Astrocyte of the cerebellum (primary cell): ENCODE measurements at regions of chr11 and their contacts with region 1.

Region 1: DNA sequence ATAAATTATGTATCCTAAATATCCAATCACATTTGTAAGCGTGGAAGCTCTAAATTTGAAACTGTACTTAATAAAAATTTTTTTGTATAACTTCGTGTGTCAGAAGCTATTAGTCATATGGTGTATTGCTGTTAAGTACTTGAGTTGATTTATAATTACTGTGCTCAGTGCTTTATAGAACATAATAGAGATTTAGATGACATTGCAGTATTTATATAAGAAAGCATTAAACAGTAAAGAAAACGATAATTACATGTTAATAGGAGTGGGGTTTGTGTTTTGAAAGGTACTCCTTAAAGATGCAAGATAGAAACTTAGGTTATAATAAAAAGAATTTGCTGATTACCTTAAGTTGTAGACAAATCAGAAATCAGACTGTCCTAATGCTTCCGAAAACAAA is 5.9 kb upstream of the TCP11L1 start:
- DNase-seq: no peak
- H3K4me3 ChIP-seq: no peak overlapping the region
- CTCF ChIP-seq: no peak

Region 2: DNA sequence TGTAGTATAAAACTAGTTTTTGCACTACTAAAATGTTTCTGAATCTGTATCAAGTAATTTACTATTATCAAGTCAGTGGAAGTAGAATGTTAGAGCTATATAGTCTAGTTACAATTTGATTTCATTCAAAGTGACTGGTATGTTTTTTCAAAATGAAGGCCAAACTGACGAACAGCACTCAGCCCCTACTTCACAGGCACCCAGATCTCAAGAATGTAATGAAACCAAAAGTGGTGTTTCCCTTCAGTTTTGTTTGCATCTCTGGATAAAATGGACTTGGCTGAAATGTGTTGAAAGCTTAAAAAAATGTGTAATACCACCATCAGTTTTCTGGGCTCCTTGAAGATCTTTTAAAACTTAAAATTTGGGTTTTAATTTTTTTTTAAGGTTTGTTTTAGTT is 94.4 kb before region 1 on chr11:
- in situ Hi-C with region 1: loop called (anchors 5 kb)
- DNase-seq: no peak
- H3K4me3 ChIP-seq: no peak overlapping the region
- CTCF ChIP-seq: no peak

Region 3: DNA sequence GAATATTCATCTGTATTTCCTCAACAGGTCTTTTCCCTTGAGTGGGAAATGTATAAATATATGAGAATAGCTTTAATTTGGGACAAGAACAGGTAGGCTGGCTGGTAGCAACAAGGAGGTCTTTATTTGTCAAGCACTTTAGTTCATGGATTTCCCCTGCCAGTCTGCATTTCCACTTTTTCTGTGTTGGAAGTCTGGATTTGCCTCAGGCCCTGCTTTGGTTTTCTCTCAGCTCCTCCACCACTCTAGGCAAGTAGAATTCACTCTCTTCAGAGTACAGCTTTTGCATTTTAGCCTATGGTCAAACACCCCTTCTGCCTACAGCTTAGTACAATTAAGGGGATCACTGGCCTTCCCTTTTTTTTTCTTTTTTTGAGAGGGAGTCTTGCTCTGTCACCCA is 83.8 kb before region 1 on chr11:
- in situ Hi-C with region 1: no loop called
- DNase-seq: no peak
- H3K4me3 ChIP-seq: no peak overlapping the region
- CTCF ChIP-seq: no peak

Region 4: DNA sequence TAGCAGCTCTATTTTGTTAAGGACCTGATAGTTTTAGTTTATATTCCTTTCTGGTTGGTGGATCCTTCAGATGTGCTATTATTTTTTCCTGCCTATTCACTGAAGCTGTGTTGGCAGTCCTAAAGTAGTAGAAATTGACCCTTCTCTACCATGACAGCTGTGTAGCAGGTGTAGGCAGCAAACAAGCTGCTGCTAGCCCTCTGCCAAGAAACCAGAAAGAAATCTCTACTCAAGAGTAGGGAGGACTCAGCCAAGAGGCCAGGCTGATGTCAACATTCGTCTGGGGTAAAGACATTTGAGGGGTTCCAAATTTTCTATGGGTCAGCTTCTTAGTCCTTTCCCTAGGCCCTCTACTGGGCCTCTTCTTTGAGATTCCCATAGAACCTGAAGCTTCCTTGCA is 76.6 kb after region 1 on chr11:
- in situ Hi-C with region 1: no loop called
- DNase-seq: no peak
- H3K4me3 ChIP-seq: no peak overlapping the region
- CTCF ChIP-seq: no peak

Region 5: DNA sequence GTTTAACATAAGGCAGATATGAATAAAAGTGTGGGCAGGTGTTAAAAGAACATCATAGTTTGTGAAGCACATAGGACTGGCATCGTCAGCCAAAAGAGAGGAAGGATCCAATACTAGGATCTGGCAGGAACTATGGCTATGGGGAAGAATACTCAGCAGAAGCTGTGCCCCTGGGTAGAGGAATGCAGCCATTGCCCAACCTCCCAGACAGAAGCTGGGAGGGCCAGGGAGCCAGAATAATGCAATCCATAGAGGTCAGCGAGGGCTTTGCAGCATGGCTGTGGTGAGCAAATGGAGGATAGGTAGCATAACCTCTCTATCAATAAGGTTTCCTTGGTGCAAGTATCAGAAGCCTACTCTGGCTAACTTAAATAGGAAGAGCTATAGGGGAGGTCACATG is 139.5 kb after region 1 on chr11:
- in situ Hi-C with region 1: no loop called
- DNase-seq: no peak
- H3K4me3 ChIP-seq: no peak overlapping the region
- CTCF ChIP-seq: no peak